ENCODE measurements at regions of chr14 and their contacts with region 1.

Region 1: GRCh38 chr14:102445066-102445465 is 64.5 kb downstream of the ANKRD9 start:
- DNase-seq: no peak
- H3K4me3 ChIP-seq: no peak overlapping the region
- CTCF ChIP-seq: no peak

Region 2: GRCh38 chr14:102509744-102510615 is 64.9 kb after region 1 on chr14 and contains the start of gene ANKRD9:
- in situ Hi-C with region 1: loop called (anchors 5 kb)
- DNase-seq: peak; percentile 76
- H3K4me3 ChIP-seq: peak within 1 kb of the TSS; percentile 52
- CTCF ChIP-seq: no peak